Activated T-helper 1 cell treated with anti-CD3 and anti-CD28 coated beads, Interleukin-12 subunit alpha, Interleukin-12 subunit beta, Interleukin-2, Interleukin-4 antibody, amounts not matched to agents 30 ng/mL and 10 ng/mL and 1 ng/mL, durations not matched to agents 14 hours and 24 hours and 36 hours (primary cell): ENCODE measurements at regions of chr19 and their contacts with region 1.

Region 1: DNA sequence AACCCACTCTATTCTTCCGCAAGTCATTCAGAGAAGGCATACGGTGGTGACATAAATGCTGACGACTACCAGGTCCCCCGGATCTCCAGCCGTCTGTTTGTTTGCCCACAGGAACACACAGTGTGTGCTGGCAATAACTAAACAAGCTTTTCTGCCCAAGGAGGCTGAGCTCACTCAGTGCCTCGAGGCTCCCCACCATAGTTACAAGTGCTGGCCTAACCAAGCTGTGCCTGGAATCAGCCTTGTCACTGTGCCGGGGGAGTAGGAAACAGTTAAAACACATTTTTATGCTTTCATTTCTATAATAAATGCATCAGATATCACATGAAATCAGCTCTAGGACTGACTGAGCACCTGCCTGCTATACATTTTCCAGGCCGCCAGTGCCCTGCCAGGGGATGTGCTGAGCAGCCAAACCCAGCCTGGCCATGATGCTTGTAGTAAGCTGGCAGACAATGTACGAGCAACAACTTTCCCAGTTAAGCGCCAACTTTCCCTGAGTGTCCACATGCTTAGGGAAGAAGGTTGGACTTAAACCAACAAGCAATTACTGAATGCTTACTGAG is 28.1 kb downstream of the BRD4 start:
- DNase-seq: no peak
- H3K4me3 Mint-ChIP-seq: no peak overlapping the region
- H3K27ac Mint-ChIP-seq: peak overlapping the region; percentile 80
- H3K4me1 Mint-ChIP-seq: peaks cover 64% of the 10 kb centered on the region
- H3K27me3 Mint-ChIP-seq: no peaks in the 10 kb centered on the region

Region 2: GRCh38 chr19:15285896-15286591 is 18.2 kb before region 1 on chr19:
- intact Hi-C with region 1: loop called (anchors 2 kb)
- DNase-seq: no peak
- H3K4me3 Mint-ChIP-seq: no peak overlapping the region
- H3K27ac Mint-ChIP-seq: peak overlapping the region; percentile 2
- H3K4me1 Mint-ChIP-seq: peaks cover 90% of the 10 kb centered on the region
- H3K27me3 Mint-ChIP-seq: no peaks in the 10 kb centered on the region

Region 3: DNA sequence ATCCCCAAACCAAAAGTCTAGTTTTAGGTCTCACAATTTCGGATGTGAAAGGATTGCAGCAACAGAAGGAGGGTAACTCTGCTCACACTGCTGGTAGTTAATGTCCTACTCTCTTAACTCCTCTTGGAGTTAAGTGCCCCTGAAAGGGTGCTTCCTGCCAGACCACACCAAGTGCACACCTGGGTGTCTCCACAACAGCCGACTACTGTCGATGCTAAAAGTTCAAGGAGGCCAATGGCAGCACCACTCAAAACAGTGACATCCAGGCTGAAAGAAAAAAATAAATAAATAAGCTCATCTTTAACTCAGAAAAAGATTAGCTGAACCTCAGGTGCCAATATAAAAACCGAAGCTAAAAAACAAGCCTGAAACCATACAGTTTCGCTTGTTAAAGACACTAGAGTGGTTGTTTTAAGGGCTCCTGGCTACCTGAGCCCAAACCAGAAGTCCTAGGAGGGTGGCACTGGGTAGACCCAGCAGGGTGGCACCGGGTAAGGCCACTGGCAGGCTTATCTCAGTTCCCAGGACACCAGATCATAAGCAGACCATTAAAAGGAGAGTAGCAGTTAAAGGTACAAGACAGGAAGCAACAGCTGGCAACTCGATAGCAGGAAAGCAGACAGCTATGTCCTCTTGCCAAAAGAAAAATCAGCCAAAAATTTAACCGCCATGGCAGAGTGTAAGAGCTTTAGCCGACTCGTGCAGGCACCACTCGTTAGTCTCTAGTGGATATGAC is 11.2 kb before region 1 on chr19:
- intact Hi-C with region 1: loop called (anchors 1 kb)
- DNase-seq: no peak
- H3K4me3 Mint-ChIP-seq: peak overlapping the region; percentile 74
- H3K27ac Mint-ChIP-seq: peak overlapping the region; percentile 93
- H3K4me1 Mint-ChIP-seq: peaks cover 94% of the 10 kb centered on the region
- H3K27me3 Mint-ChIP-seq: no peaks in the 10 kb centered on the region

Region 4: DNA sequence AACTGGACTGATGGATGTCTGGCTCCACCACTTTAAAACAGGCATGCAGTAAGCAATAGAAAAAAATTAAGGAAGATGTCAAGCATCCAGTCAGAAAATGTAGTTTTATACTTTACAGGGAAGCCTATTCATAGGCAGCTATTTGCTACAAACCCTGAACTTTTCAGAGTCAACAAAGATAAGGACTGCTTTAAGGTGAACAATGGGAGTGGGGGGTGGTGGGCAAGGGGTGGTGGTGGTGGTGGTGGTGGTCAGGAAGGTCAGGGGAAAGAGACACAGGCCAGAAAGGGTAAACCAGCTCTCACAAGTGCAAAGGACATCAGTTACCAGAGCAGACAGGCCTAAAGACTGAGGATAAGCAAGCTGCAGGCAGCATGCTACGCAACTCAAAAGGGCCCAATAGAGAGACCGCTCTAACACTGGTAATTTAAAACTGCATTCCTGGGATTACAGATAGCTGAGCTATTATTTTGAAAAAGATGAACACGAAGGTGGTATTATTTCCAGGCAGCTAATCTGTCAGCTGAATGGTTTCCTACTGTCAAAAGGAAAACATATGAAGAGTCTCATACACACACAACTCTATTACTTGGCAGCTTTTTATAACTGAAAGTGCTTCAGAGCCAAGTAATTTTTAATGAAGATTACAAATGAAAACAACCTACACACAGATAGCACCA is 13.3 kb after region 1 on chr19:
- intact Hi-C with region 1: loop called (anchors 2 kb)
- DNase-seq: no peak
- H3K4me3 Mint-ChIP-seq: peak overlapping the region; percentile 34
- H3K27ac Mint-ChIP-seq: peak overlapping the region; percentile 53
- H3K4me1 Mint-ChIP-seq: peaks cover 78% of the 10 kb centered on the region
- H3K27me3 Mint-ChIP-seq: no peaks in the 10 kb centered on the region

Region 5: GRCh38 chr19:15332311-15332996 is 28.2 kb after region 1 on chr19 and contains the start of gene BRD4:
- intact Hi-C with region 1: loop called (anchors 2 kb)
- DNase-seq: peak; percentile 78
- H3K4me3 Mint-ChIP-seq: peak within 1 kb of the TSS; percentile 98
- H3K27ac Mint-ChIP-seq: peak within 1 kb of the TSS; percentile 98
- H3K4me1 Mint-ChIP-seq: peaks cover 35% of the 10 kb centered on the region
- H3K27me3 Mint-ChIP-seq: no peaks in the 10 kb centered on the region
- total RNA-seq, gene BRD4: 122 and 129 TPM in 2 replicates

Region 6: GRCh38 chr19:15379083-15379995 is 75.1 kb after region 1 on chr19 and contains the start of gene AKAP8:
- intact Hi-C with region 1: no loop called
- DNase-seq: peak; percentile 98
- H3K4me3 Mint-ChIP-seq: peak within 1 kb of the TSS; percentile 98
- H3K27ac Mint-ChIP-seq: peak within 1 kb of the TSS; percentile 100
- H3K4me1 Mint-ChIP-seq: peaks cover 35% of the 10 kb centered on the region
- H3K27me3 Mint-ChIP-seq: no peaks in the 10 kb centered on the region
- total RNA-seq, gene AKAP8: 52.7 and 57.5 TPM in 2 replicates

Region 7: DNA sequence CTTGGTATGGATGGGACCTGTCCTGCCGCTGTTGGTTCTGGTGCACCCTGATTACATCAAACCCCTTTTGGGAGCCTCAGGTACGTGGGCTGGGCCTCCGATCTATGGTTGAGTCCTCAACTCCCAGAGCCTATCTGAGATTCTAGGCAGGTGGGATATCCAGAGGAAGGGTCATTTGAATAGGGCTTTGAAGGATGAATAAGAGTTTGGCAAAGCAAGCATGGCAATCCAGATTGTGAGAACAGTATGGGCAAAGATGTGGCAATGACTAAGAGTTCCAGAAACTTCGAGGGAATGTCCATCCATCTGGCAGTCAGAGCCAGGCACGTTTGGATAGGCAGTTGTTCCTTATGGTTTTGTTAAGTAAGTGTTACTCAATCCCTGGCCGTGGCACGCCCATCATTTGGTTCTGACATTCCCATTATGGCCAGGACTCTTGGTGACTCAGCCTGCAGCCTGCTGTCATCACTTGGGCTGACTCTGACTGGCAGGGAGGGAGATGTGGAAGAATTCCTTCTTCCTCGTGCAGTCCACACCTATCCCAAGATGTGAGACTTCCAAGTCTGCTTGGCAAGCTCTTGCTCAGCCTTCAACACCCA is 225.7 kb after region 1 on chr19:
- intact Hi-C with region 1: no loop called
- DNase-seq: no peak
- H3K4me3 Mint-ChIP-seq: no peak overlapping the region
- H3K27ac Mint-ChIP-seq: no peak overlapping the region
- H3K4me1 Mint-ChIP-seq: peaks cover 20% of the 10 kb centered on the region
- H3K27me3 Mint-ChIP-seq: peaks cover 10% of the 10 kb centered on the region